Astrocyte of the cerebellum (primary cell): ENCODE measurements at regions of chr1 and their contacts with region 1.

Region 1: DNA sequence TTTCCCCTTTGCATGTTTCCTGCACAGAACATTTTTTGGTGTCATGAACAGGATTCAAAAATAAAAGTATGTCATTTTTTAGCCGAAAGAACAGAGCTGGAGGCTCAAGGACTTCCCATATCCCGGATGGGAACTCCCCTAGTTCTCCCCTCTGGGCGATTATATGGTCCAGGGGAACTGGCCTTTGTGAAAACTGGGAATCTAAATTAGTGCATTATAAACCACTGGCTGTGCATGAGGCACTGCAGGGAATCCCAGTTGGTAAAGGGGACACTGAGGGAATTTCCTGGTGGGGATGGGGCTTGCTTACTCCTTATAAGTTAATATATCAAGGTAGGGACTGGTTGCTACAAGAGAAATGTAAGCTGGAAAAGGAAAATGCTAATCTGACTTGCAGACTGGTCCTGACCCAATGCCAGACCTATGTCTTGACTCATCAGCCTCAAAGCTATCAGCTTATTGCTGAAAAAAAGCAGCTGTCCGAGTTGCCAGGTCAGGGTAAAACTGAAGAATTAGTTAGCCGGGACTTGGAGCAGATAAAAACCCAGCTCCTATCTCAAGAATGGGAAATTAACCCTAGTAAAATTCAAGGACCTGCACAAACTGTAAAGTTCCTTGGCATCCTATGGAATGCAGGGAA is 122.6 kb downstream of the FCRL5 start:
- DNase-seq: peak; percentile 16
- H3K4me3 ChIP-seq: no peak overlapping the region
- CTCF ChIP-seq: no peak

Region 2: DNA sequence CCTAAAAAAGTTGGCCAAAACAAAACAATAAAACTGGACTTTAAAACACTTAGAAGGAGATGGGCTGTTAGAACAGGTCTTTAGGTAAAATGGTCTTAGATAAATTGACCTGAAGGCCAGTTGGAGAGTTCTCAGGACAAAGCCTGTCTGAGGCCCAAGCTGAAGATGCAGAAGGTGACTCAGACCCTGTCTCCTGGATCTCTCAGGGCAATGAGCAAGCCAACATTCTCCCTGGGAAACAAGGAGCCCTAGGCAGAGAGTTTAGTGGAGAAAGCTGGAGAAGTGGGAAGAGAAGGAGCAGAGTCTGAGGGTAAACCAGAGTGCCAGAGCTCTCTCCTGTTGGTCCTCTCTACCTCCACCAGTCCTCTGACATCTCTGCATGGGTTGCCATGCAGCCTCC is 52.5 kb after region 1 on chr1:
- in situ Hi-C with region 1: loop called (anchors 5 kb)
- DNase-seq: no peak
- H3K4me3 ChIP-seq: no peak overlapping the region
- CTCF ChIP-seq: no peak

Region 3: DNA sequence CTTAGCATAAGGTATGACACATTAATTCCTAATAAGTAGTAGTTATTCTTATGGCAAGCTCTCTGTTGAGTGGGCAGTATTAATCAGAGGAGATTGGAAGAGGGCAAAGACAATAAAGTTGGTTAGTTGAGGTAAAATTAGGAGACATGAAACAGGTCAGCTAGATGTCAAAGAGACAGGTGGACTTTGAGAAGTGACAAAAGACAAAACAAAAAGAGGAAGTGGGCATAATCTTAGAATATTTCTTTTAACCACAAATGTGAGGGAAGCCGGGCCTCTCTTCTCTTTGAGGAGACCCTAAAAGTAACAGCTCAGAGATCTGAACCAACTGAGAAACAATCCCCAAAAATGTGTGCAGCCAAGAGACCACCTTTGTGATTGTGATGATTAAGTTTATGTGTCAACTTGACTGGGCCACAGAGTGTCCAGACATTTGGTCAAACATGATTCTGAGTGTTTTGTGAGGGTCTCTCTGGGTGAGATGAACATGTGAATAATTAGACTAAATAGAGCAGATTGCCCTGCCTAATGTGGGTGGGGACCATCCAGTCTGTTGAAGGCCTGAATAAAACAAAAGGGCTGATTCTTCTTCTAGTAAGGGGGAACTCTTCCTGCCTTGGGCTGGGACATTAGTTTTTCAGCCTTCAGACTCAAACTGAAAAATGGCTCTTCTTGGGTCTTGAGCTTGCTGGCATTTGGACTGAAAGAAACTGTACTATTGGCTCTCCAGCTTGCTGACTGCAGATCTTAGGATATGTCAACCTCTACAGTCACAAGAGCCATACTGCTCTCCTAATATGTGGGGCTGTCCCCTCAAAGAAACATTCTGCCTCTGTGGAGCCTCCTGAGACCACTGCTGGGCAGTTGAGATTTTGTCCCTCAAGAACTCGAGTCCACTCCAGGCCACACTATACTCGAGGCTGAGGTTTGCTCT is 82.6 kb after region 1 on chr1:
- in situ Hi-C with region 1: no loop called
- DNase-seq: no peak
- H3K4me3 ChIP-seq: no peak overlapping the region
- CTCF ChIP-seq: no peak